ENCODE measurements at regions of chr12 and their contacts with region 1.

Region 1: GRCh38 chr12:57124259-57124877 is 3.9 kb upstream of the LRP1 start:
- H3K4me3 ChIP-seq: no peak overlapping the region
- H3K27ac ChIP-seq: no peak overlapping the region
- H3K4me1 ChIP-seq: peaks cover 10% of the 10 kb centered on the region
- CTCF ChIP-seq: peak; percentile 62; the same call in 1 of the 2 replicates

Region 2: GRCh38 chr12:57078519-57079404 is 45.6 kb before region 1 on chr12 and contains the start of gene NEMP1:
- CTCF ChIA-PET with region 1: interaction called, 9 read pairs
- POLR2A ChIA-PET with region 1: interaction called, 18 read pairs
- H3K4me3 ChIP-seq: peak within 1 kb of the TSS; percentile 75
- H3K27ac ChIP-seq: peak within 1 kb of the TSS; percentile 96
- H3K4me1 ChIP-seq: peaks cover 3% of the 10 kb centered on the region
- CTCF ChIP-seq: no peak

Region 3: GRCh38 chr12:57096099-57096572 is 28.2 kb before region 1 on chr12:
- CTCF ChIA-PET with region 1: interaction called, 16 read pairs
- POLR2A ChIA-PET with region 1: interaction called, 3 read pairs
- H3K4me3 ChIP-seq: no peak overlapping the region
- H3K27ac ChIP-seq: no peak overlapping the region
- H3K4me1 ChIP-seq: no peaks in the 10 kb centered on the region
- CTCF ChIP-seq: no peak

Region 4: GRCh38 chr12:57175428-57176138 is 51.2 kb after region 1 on chr12:
- CTCF ChIA-PET with region 1: interaction called, 259 read pairs
- POLR2A ChIA-PET with region 1: interaction called, 18 read pairs
- H3K4me3 ChIP-seq: no peak overlapping the region
- H3K27ac ChIP-seq: no peak overlapping the region
- H3K4me1 ChIP-seq: no peaks in the 10 kb centered on the region
- CTCF ChIP-seq: peak; percentile 92

Region 5: GRCh38 chr12:57435293-57435692 is 310.9 kb after region 1 on chr12:
- CTCF ChIA-PET with region 1: no interaction called
- POLR2A ChIA-PET with region 1: no interaction called
- H3K4me3 ChIP-seq: no peak overlapping the region
- H3K27ac ChIP-seq: no peak overlapping the region
- H3K4me1 ChIP-seq: no peaks in the 10 kb centered on the region
- CTCF ChIP-seq: no peak

Measured in HEK293 (cell line).